Endothelial cell of umbilical vein (primary cell): ENCODE measurements at regions of chr1 and their contacts with region 1.

Region 1: GRCh38 chr1:55428944-55429931 is 214.1 kb upstream of the USP24 start:
- DNase-seq: peak; percentile 99
- H3K4me3 ChIP-seq: no peak overlapping the region
- H3K27ac ChIP-seq: peak overlapping the region; percentile 93
- H3K4me1 ChIP-seq: peaks cover 32% of the 10 kb centered on the region
- H3K27me3 ChIP-seq: no peaks in the 10 kb centered on the region
- CTCF ChIP-seq: no peak
- POLR2A ChIP-seq: peak; percentile 54

Region 2: GRCh38 chr1:55386456-55386855 is 42.8 kb before region 1 on chr1:
- CTCF ChIA-PET with region 1: no interaction called
- POLR2A ChIA-PET with region 1: no interaction called
- dilution Hi-C with region 1: no loop called
- intact Hi-C with region 1: no loop called
- DNase-seq: no peak
- H3K4me3 ChIP-seq: no peak overlapping the region
- H3K27ac ChIP-seq: no peak overlapping the region
- H3K4me1 ChIP-seq: no peaks in the 10 kb centered on the region
- H3K27me3 ChIP-seq: no peaks in the 10 kb centered on the region
- CTCF ChIP-seq: no peak
- POLR2A ChIP-seq: no peak

Region 3: GRCh38 chr1:55400508-55400907 is 28.7 kb before region 1 on chr1:
- CTCF ChIA-PET with region 1: no interaction called
- POLR2A ChIA-PET with region 1: no interaction called
- dilution Hi-C with region 1: no loop called
- intact Hi-C with region 1: no loop called
- DNase-seq: no peak
- H3K4me3 ChIP-seq: no peak overlapping the region
- H3K27ac ChIP-seq: no peak overlapping the region
- H3K4me1 ChIP-seq: no peaks in the 10 kb centered on the region
- H3K27me3 ChIP-seq: no peaks in the 10 kb centered on the region
- CTCF ChIP-seq: no peak
- POLR2A ChIP-seq: no peak

Region 4: DNA sequence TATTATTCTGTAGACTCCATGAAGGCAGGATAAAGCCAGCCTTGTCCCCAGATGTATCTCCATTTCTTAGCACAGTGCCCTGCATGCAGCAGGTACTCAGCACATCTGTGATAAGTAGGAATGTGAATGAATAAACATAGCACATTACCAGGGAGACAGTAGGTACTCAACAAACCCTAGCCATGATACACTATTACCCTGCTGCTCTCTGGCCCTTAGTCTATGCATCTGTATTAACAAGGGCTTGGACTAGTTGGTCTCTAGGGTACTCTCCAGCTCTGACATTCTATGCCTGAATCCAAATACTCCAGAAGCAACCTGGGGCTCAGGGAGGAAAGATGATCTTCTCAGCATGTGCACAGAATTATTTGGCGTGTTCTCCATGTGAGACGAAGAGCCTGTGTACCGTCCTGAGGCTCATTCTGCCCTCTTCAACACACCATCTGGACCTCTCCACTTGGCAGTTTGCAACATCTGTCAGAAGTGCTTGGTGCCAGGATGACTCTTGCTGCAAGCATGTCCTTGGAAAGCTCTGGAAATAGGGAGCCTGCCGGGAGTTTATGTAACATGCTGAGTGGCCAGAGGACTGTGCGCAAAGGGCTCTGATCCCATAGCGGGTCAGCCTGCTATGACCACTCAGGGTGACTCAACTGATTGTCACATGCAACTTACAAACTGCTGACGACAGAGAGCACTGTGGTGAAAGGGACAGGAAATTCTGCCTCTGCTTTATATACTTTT is 14.1 kb after region 1 on chr1:
- CTCF ChIA-PET with region 1: interaction called, 7 read pairs
- POLR2A ChIA-PET with region 1: no interaction called
- dilution Hi-C with region 1: no loop called
- intact Hi-C with region 1: loop called (anchors 1 kb)
- DNase-seq: peak; percentile 37
- H3K4me3 ChIP-seq: no peak overlapping the region
- H3K27ac ChIP-seq: no peak overlapping the region
- H3K4me1 ChIP-seq: peaks cover 31% of the 10 kb centered on the region
- H3K27me3 ChIP-seq: no peaks in the 10 kb centered on the region
- CTCF ChIP-seq: no peak
- POLR2A ChIP-seq: no peak

Region 5: DNA sequence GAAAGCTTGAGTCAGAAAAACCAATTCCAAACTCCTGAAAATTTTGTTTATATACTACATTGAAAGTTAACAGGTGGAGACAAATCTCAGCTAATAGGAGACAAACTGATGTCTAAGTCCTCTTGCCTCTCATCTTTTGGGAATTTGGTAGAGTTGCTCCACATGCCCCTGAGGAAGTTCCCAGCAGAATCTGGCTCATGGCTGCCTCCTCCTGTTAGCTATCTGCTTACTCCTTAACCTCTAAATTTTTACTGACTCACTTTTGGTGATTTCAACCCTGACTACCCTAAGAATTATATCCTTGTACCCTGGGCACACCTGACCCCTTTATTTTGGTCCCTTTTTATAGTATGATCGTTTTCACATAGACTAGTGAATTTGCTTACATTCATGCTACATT is 419.7 kb after region 1 on chr1:
- CTCF ChIA-PET with region 1: no interaction called
- POLR2A ChIA-PET with region 1: no interaction called
- dilution Hi-C with region 1: no loop called
- intact Hi-C with region 1: no loop called
- DNase-seq: no peak
- H3K4me3 ChIP-seq: no peak overlapping the region
- H3K27ac ChIP-seq: no peak overlapping the region
- H3K4me1 ChIP-seq: no peaks in the 10 kb centered on the region
- H3K27me3 ChIP-seq: no peaks in the 10 kb centered on the region
- CTCF ChIP-seq: no peak
- POLR2A ChIP-seq: no peak